ENCODE measurements at regions of chr10 and their contacts with region 1.

Region 1: DNA sequence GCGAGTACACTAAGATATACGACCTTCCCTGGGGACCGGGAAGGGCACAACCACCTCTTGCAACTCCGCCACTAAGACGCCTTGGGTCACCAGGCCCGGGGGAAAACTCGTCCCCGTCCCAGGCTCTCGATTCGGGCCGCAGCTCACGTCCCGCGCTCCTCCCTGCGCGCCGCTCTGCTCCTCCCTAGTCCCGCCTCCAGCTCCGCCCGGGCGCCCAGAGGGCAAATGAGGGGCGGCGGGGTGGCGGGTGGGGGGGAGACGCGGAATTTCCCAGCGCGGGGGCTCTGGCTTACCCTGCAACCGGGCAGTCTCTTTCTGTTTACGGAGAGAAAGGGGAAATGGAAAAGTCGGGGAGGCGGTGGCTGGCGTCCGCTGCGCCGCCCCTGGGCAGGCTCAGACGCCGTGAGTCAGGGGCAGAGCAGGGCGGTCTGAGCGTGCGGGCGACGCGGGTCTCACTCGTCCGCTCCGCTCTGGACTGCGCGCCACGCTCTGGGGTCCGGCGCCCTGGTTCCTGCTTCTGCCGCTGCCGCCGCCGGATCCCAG is at the start of gene MAP3K8:
- DNase-seq: peak; percentile 83 to 94
- ATAC-seq: peak; percentile 79 to 87
- H3K4me3 ChIP-seq: peak within 1 kb of the TSS; percentile 94
- H3K27ac ChIP-seq: peak within 1 kb of the TSS; percentile 91 to 97
- H3K4me1 ChIP-seq: peaks cover 55% of the 10 kb centered on the region
- CTCF ChIP-seq: no peak
- EP300 ChIP-seq: no peak
- POLR2A ChIP-seq: peak; percentile 92
- RAD21 ChIP-seq: no peak; a peak in 1 of 5 replicates
- polyA plus RNA-seq, gene MAP3K8: 45.1 and 50.8 TPM in 2 replicates

Region 2: DNA sequence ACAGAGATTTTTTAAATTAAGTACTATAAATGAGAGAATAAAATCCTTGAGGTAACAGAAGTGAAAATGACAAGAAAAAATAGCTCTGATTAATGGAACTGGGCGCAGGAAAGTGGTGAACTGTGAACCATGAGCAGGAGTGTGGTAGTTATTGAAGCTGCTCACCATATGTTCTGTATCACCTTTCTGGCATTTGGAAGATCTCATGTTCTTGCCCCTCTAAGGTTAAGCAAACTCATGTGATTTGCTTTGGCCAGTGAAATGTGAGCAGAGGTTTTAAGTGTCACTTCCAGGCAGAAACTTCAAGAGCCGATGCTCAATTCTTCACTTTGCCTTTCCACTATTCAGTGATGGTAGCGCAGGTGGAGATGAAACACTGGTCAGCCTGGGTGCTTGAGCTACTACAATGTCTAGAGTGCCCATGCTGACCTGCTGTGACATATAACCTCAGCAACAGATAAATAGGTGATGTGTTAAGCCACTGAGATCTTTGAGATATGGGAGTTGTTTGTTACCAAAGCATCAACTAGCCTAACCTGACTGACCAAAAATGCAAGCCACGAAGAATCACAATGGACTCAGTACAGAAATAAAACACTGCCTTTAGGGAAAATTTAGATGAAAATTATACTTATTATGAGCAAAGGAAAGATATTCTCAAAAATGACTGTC is 103.2 kb before region 1 on chr10:
- CTCF ChIA-PET with region 1: no interaction called
- POLR2A ChIA-PET with region 1: no interaction called
- DNase-seq: no peak
- ATAC-seq: no peak
- H3K4me3 ChIP-seq: no peak overlapping the region
- H3K27ac ChIP-seq: no peak overlapping the region
- H3K4me1 ChIP-seq: no peaks in the 10 kb centered on the region
- CTCF ChIP-seq: no peak
- EP300 ChIP-seq: no peak
- POLR2A ChIP-seq: no peak
- RAD21 ChIP-seq: no peak

Region 3: DNA sequence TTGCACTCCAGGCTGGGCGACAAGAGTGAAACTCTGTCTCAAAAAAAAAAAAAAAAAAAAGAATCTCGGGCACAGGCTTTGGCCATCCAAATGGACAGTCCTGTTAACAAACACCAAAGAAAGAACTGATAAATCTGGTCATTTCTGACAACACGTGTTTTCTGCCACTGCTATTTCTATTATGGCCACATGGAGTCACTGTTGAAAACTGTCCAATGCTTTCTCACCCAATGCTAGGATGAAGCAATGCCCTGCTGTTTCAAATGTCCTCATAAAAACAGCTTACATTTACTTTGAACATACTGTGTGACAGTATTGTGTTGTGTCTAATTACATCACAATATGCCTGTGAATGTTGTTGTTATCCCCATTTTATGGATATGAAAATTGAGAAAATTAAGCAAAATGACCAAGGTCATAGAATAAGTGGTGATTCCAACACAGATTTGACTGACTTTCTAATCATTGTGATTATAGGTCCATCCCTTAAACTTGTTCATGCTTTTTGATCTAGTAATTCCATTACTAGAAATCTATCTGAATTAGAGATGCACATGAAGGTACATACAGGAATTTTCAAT is 19.7 kb before region 1 on chr10:
- CTCF ChIA-PET with region 1: interaction called, 15 read pairs
- POLR2A ChIA-PET with region 1: interaction called, 24 read pairs
- DNase-seq: peak; percentile 80 to 84
- ATAC-seq: peak; percentile 80 to 85
- H3K4me3 ChIP-seq: no peak overlapping the region
- H3K27ac ChIP-seq: peak overlapping the region; percentile 27 to 63; a peak in 4 of 6 replicates
- H3K4me1 ChIP-seq: peaks cover 17% of the 10 kb centered on the region
- CTCF ChIP-seq: peak; percentile 76
- EP300 ChIP-seq: no peak
- POLR2A ChIP-seq: no peak
- RAD21 ChIP-seq: peak; percentile 84

Region 4: GRCh38 chr10:30422981-30423654 is 10.7 kb before region 1 on chr10:
- CTCF ChIA-PET with region 1: interaction called, 9 read pairs
- POLR2A ChIA-PET with region 1: interaction called, 117 read pairs
- DNase-seq: peak; percentile 89 to 96
- ATAC-seq: peak; percentile 96 to 99
- H3K4me3 ChIP-seq: peak overlapping the region; percentile 9; the same call in 1 of the 3 replicates
- H3K27ac ChIP-seq: peak overlapping the region; percentile 90 to 94
- H3K4me1 ChIP-seq: peaks cover 52% of the 10 kb centered on the region
- CTCF ChIP-seq: no peak
- EP300 ChIP-seq: peak; percentile 49 to 80; a peak in 3 of 5 replicates
- POLR2A ChIP-seq: peak; percentile 19; the same call in 1 of the 2 replicates
- RAD21 ChIP-seq: no peak; a peak in 2 of 5 replicates

Region 5: DNA sequence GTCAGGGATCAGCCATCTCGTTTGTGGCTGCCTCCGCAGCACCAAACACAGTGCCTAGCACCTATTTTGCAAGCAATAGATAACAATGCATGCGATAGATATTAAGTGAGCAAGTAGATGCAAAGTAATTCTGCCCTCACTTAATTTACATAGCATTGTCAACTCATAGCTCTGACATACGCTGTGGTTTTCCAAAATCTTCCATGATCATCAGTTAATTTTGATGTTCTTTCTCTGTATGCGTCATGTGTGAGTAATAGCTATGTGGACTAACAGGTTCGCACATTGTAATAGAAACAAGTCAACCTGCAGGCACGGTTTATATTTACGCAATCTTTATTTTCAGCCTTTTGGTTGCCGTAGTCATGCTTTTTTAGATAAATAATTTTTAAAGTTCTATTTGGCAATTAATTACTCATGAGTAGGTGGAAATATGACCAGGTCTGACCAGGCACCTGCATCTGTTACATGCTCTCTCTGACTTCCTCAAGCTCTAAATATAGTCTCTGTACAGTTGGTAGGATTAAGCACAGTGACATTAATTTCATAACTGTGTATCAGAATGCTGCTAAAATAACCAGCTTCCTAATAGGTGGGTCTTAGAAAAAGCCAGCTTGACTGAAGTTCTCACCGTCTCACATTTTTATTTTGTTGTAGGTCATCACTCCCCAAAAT is 13.5 kb after region 1 on chr10:
- CTCF ChIA-PET with region 1: interaction called, 5 read pairs
- POLR2A ChIA-PET with region 1: interaction called, 12 read pairs
- DNase-seq: no peak
- ATAC-seq: no peak
- H3K4me3 ChIP-seq: no peak overlapping the region
- H3K27ac ChIP-seq: no peak overlapping the region
- H3K4me1 ChIP-seq: peaks cover 6% of the 10 kb centered on the region; the same call in 1 of the 3 replicates
- CTCF ChIP-seq: no peak
- EP300 ChIP-seq: no peak
- POLR2A ChIP-seq: no peak
- RAD21 ChIP-seq: no peak

Measured in A549 (cell line).